ENCODE measurements at regions of chr1 and their contacts with region 1.

Region 1: GRCh38 chr1:171313835-171314320 is at the start of gene FMO4:
- DNase-seq: peak; percentile 68
- ATAC-seq: peak; percentile 100
- total RNA-seq, gene FMO4: 3.8 TPM

Region 2: DNA sequence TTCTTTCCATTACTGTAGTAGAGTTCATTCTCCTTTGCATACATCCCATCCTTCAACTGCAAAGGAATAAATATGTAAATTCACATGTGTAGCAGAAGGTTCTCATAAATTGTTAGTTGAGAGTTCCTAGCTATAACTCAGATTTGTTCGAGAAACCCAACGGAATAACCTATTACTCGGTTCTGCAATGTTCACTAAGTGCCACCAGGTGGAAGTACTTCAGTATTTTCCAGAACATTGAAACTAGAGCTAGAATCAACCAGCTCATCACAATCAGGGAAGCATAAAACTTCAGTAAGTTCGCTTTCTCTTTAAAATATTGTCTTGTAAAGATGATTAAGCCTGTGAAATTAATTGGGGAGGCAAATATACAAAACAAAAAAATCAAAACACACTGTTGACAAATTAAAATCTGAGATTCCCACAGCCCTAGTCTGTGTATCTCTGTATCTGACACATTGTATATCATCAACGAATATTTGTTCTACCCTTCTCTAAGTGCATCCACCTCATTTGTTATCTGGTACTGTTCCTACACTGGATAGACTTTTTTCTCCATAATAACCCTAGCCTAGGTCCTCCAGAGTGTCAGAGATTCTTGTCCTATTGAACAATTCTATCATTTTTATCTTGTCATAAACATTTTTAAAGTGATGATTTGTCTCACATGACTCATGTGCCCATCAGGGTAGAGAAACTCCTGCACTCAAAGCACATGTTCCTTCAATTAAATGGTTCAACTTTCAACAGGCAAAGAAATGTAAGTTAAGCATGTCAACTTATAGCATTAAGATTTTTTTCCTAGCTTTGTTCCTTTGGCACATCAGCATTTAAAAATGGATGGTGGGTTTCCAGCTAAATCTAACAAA is 346.6 kb before region 1 on chr1:
- intact Hi-C with region 1: loop called (anchors 10 kb)
- DNase-seq: no peak
- ATAC-seq: peak; percentile 80

Region 3: DNA sequence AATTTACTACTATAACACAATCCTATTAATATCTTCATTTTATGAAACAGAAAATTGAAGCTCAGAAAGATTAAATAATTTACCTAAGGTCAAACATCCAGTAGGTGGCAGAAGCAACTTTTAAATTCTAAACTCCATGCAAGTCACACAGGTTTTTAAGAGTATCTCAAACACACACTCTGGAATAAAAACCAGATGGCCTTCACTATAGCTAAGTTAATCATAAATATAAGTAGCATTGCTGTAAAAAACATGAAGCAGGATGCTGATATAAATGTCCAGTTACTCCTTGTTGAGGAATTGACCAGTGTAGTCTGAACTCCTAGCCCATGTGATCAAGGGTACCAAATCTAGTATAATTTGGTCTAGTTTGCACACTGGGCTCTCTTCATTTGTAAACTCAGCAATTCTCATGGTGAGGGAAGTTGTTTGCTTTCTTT is 232.5 kb before region 1 on chr1:
- intact Hi-C with region 1: loop called (anchors 5 kb)
- DNase-seq: no peak
- ATAC-seq: peak; percentile 64

Region 4: GRCh38 chr1:171152549-171152948 is 161.3 kb before region 1 on chr1:
- intact Hi-C with region 1: no loop called
- DNase-seq: no peak
- ATAC-seq: peak; percentile 53

Region 5: DNA sequence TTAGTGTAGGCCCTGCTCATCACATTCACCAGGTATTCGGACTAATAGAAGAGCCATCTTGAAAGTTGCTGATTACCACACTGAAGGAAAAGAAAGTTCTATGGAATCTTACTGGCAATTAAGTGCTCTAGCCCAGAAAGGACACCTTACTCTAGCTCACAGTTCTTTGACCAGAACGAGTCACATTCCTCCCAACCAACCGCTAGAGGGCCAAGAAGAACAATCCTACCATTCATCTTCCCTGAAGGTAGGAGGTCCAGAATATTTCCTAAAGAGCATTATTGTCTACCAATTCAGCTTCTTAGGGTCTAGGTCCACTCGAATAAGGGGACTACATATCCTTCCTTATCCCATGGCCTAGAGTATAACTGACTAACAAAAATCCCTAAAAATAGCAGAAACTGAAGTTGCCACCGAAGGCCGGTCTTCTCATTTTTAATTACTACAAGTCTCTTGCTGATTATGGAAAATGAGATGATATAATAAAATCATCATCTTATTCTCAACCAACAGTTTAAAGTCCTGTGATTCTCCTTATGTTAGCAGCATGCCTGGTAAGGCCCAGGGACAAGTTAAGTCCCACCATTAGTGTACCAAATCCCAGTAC is 68.3 kb before region 1 on chr1:
- intact Hi-C with region 1: loop called (anchors 2 kb)
- DNase-seq: no peak
- ATAC-seq: peak; percentile 75